ENCODE measurements at regions of chr5 and their contacts with region 1.

Region 1: GRCh38 chr5:119411935-119412602 is 40.2 kb upstream of the HSD17B4 start:
- DNase-seq: peak; percentile 19 to 60 (median 28)
- H3K4me3 ChIP-seq: peak overlapping the region; percentile 45
- H3K27ac ChIP-seq: peak overlapping the region in 1 of 2 donors; percentile 6
- H3K4me1 ChIP-seq: no peaks in the 10 kb centered on the region
- H3K27me3 ChIP-seq: no peaks in the 10 kb centered on the region
- CTCF ChIP-seq: peak; percentile 80 to 84 (median 82)
- EP300 ChIP-seq: no peak
- POLR2A ChIP-seq: no peak

Region 2: GRCh38 chr5:118987988-118988865 is 423.8 kb before region 1 on chr5 and contains the start of gene DTWD2:
- intact Hi-C with region 1: loop called (anchors 1 to 10 kb)
- DNase-seq: peak; percentile 88 to 94 (median 92)
- H3K4me3 ChIP-seq: peak within 1 kb of the TSS; percentile 72
- H3K27ac ChIP-seq: peak within 1 kb of the TSS; percentile 76 to 97
- H3K4me1 ChIP-seq: no peaks in the 10 kb centered on the region
- H3K27me3 ChIP-seq: no peaks in the 10 kb centered on the region
- CTCF ChIP-seq: peak; percentile 92 to 98 (median 95)
- EP300 ChIP-seq: no peak
- POLR2A ChIP-seq: no peak
- total RNA-seq, gene DTWD2: 3.2 to 12.5 (median 5.3) TPM

Region 3: GRCh38 chr5:119267958-119268386 is 144.1 kb before region 1 on chr5:
- intact Hi-C with region 1: loop called in 1 of 4 experiments (anchors 10 kb)
- DNase-seq: peak; percentile 80 to 89 (median 85)
- H3K4me3 ChIP-seq: peak overlapping the region; percentile 88
- H3K27ac ChIP-seq: peak overlapping the region in 1 of 2 donors; percentile 85
- H3K4me1 ChIP-seq: peaks cover 1% of the 10 kb centered on the region
- H3K27me3 ChIP-seq: no peaks in the 10 kb centered on the region
- CTCF ChIP-seq: no peak
- EP300 ChIP-seq: no peak
- POLR2A ChIP-seq: no peak

Region 4: GRCh38 chr5:119336845-119337580 is 75.1 kb before region 1 on chr5:
- intact Hi-C with region 1: loop called in 1 of 4 experiments (anchors 5 kb)
- DNase-seq: no peak
- H3K4me3 ChIP-seq: no peak overlapping the region
- H3K27ac ChIP-seq: no peak overlapping the region
- H3K4me1 ChIP-seq: peaks cover 3% of the 10 kb centered on the region
- H3K27me3 ChIP-seq: no peaks in the 10 kb centered on the region
- CTCF ChIP-seq: no peak
- EP300 ChIP-seq: no peak
- POLR2A ChIP-seq: no peak